Sigmoid colon (tissue), 7 donors: ENCODE measurements at regions of chr19 and their contacts with region 1.

Region 1: DNA sequence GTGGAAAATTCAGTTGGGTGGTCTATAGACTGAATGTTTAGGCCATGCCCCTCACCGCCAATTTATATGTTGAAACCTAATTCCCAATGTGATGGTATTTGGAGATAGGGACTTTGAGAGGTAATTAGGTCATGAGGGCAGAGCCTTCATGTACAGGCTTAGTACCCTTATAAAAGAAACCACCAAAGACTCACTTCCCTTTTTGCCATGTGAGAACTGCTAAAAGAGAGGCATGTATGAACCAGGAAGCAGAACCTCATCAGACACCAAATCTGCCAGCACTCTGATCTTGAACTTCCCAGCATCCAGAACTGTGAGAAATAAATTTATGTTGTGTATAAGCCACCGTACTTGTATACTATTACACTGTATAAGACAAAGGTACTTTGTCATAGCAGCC is 40.6 kb downstream of the UQCRFS1 start:
- DNase-seq: no peak
- H3K4me3 ChIP-seq: no peak overlapping the region
- H3K27ac ChIP-seq: no peak overlapping the region
- H3K4me1 ChIP-seq: no peaks in the 10 kb centered on the region
- H3K27me3 ChIP-seq: no peaks in the 10 kb centered on the region
- CTCF ChIP-seq: no peak
- EP300 ChIP-seq: no peak
- POLR2A ChIP-seq: no peak

Region 2: DNA sequence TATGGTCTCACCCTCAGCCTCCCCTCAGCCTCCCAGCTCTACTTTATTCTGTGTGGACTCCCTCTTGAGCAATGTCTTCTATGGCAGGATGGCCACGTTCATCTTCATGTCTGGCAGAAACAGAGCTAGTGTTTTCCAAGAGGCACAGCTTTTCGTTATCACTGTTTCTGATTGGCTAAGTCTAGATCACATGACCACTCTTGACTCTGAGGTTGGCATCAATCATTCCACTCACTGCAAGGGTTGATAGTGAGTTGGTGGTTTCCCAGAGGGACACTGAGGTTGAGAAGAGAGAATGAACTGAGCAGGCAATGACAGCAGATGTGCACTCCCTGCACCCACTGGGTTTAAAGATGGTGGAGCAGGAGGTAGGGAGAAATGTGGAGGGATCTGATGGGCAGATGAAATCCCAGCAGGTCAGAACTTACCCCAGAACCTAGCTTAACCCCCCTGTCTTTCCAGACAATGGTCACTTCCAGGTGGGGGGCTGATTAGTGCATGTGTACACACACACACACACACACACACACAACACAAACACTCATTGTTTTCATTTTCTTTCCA is 67.0 kb after region 1 on chr19:
- intact Hi-C with region 1: loop called (anchors 10 kb)
- DNase-seq: no peak
- H3K4me3 ChIP-seq: no peak overlapping the region
- H3K27ac ChIP-seq: no peak overlapping the region
- H3K4me1 ChIP-seq: no peaks in the 10 kb centered on the region
- H3K27me3 ChIP-seq: peaks cover 0 to 3% (median 0%) of the 10 kb centered on the region in 3 donors
- CTCF ChIP-seq: no peak
- EP300 ChIP-seq: no peak
- POLR2A ChIP-seq: no peak

Region 3: GRCh38 chr19:29260477-29261317 is 88.4 kb after region 1 on chr19:
- intact Hi-C with region 1: no loop called
- DNase-seq: no peak
- H3K4me3 ChIP-seq: no peak overlapping the region
- H3K27ac ChIP-seq: no peak overlapping the region
- H3K4me1 ChIP-seq: no peaks in the 10 kb centered on the region
- H3K27me3 ChIP-seq: no peaks in the 10 kb centered on the region
- CTCF ChIP-seq: peak in 1 of 4 experiments; percentile 15
- EP300 ChIP-seq: no peak
- POLR2A ChIP-seq: no peak

Region 4: GRCh38 chr19:29294343-29294811 is 122.1 kb after region 1 on chr19:
- intact Hi-C with region 1: no loop called
- DNase-seq: no peak
- H3K4me3 ChIP-seq: no peak overlapping the region
- H3K27ac ChIP-seq: no peak overlapping the region
- H3K4me1 ChIP-seq: no peaks in the 10 kb centered on the region
- H3K27me3 ChIP-seq: no peaks in the 10 kb centered on the region
- CTCF ChIP-seq: no peak
- EP300 ChIP-seq: no peak
- POLR2A ChIP-seq: no peak